ENCODE measurements at regions of chr14 and their contacts with region 1.

Region 1: DNA sequence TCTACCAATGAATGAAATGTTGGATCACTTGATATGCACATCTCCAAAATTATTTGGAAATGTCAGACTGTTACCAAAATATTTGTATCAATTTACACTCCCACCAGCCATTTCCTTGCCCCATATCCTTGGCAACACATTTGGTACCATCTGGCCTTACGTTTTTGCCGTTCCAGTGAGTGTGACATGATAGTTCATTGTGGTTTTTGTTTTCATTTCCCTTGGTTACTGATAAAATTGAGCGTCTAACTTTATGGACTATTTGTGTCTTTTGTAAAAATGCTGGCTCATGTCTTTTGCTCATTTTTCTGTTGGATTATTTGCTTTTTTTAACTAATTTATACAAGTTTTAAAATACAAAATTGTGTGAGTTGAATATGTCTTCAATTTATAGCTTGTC is 11.0 kb downstream of the KLHDC1 start:
- DNase-seq: no peak
- H3K4me3 ChIP-seq: no peak overlapping the region
- H3K27ac ChIP-seq: no peak overlapping the region
- H3K4me1 ChIP-seq: no peaks in the 10 kb centered on the region
- CTCF ChIP-seq: no peak

Region 2: GRCh38 chr14:49692811-49693734 is 10.9 kb before region 1 on chr14 and contains the start of gene KLHDC1:
- CTCF ChIA-PET with region 1: no interaction called
- POLR2A ChIA-PET with region 1: interaction called, 12 read pairs
- intact Hi-C with region 1: no loop called
- DNase-seq: peak; percentile 63
- H3K4me3 ChIP-seq: peak within 1 kb of the TSS; percentile 66
- H3K27ac ChIP-seq: no peak within 1 kb of the TSS
- H3K4me1 ChIP-seq: peaks cover 26% of the 10 kb centered on the region
- CTCF ChIP-seq: no peak
- total RNA-seq, gene KLHDC1: 0.25 and 0.26 TPM in 2 replicates